CD4-positive, alpha-beta memory T cell (primary cell): ENCODE measurements at regions of chr16 and their contacts with region 1.

Region 1: DNA sequence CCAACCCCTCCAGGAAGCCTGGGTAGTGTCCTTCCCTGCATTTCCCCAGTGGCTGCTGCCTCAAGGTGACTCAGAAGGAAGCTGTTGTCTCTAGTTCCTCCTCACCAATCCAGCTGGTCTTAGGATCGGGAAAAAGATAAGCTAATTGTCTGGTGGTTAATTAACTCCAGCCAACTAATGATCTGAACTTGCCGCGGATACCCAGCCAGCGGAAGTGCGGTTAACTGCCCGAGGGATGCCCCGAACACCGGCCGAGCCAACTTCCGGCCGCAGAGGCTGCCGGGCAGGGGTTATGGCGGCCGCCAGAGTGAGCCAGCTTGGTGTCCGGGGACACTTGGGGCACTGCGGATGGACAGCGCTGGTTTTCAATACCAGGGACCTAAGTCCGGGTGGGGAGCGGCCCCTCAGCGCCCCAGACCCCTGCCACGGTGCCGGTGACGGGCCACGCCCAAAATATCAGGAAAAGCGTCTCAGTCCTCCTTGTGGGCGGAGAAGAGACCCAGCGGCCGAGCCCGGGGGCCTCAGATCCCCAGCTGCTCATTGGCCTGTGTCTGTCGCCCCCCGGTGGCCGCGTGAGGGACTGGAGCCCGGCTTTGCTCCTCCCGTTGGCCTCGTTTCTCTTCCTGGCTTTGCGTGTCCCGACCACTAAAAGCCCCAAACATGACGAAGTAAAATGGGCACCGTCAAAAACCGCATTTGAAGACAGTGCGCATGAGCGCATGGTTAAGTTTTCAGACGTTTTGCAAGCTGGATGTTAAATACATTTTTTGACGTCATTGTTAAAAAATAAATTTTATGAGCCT is 10.2 kb upstream of the PRSS22 start:
- DNase-seq: peak; percentile 94 to 98 (median 96)
- H3K4me3 ChIP-seq: peak overlapping the region; percentile 17 to 76
- H3K4me3 Mint-ChIP-seq: peak overlapping the region; percentile 77 to 90 (median 88)
- H3K27ac ChIP-seq: peak overlapping the region; percentile 69
- H3K27ac Mint-ChIP-seq: peak overlapping the region; percentile 54 to 94 (median 91)
- H3K4me1 ChIP-seq: peaks cover 13% of the 10 kb centered on the region
- H3K4me1 Mint-ChIP-seq: peaks cover 7 to 25% (median 13%) of the 10 kb centered on the region in 4 donors
- H3K27me3 ChIP-seq: no peaks in the 10 kb centered on the region
- H3K27me3 Mint-ChIP-seq: no peaks in the 10 kb centered on the region

Region 2: DNA sequence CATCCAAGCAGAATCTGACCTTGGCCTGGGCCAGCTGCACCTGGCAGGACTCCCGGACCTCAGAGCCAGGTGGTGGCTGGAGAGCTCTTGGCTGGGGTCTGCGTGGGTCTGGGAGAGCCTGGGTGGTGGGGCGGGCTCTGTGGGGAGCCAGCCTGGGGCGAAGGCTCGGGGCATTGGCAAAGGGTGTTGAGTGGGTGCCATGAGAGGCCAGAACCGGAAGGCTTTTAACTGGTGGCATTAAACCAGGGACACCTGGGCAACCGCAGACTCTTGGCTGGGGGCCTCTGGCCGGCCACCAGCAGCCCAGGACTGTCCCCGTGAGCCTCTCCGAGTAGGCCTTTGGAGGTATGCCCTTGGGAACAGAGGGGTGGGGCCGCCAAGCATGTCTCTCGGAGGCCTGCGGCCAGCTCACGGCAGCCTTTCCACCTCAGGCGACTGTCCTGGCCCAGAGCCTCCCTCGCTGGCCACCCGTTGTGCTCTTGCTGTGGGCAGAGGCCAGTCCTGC is 164.9 kb before region 1 on chr16:
- CTCF ChIA-PET with region 1: no interaction called
- POLR2A ChIA-PET with region 1: no interaction called
- intact Hi-C with region 1: no loop called
- DNase-seq: no peak
- H3K4me3 ChIP-seq: no peak overlapping the region
- H3K4me3 Mint-ChIP-seq: no peak overlapping the region
- H3K27ac ChIP-seq: no peak overlapping the region
- H3K27ac Mint-ChIP-seq: no peak overlapping the region
- H3K4me1 ChIP-seq: no peaks in the 10 kb centered on the region
- H3K4me1 Mint-ChIP-seq: no peaks in the 10 kb centered on the region
- H3K27me3 ChIP-seq: no peaks in the 10 kb centered on the region
- H3K27me3 Mint-ChIP-seq: no peaks in the 10 kb centered on the region

Region 3: GRCh38 chr16:2720719-2721633 is 147.2 kb before region 1 on chr16:
- CTCF ChIA-PET with region 1: interaction called, 3 read pairs
- POLR2A ChIA-PET with region 1: no interaction called
- intact Hi-C with region 1: loop called (anchors 1 kb)
- DNase-seq: peak; percentile 85 to 88 (median 87)
- H3K4me3 ChIP-seq: peak overlapping the region; percentile 17 to 49
- H3K4me3 Mint-ChIP-seq: peak overlapping the region; percentile 70 to 85 (median 74)
- H3K27ac ChIP-seq: peak overlapping the region; percentile 56
- H3K27ac Mint-ChIP-seq: peak overlapping the region; percentile 56 to 90 (median 73)
- H3K4me1 ChIP-seq: peaks cover 5% of the 10 kb centered on the region
- H3K4me1 Mint-ChIP-seq: no peaks in the 10 kb centered on the region
- H3K27me3 ChIP-seq: no peaks in the 10 kb centered on the region
- H3K27me3 Mint-ChIP-seq: peaks cover 4 to 7% of the 10 kb centered on the region in 2 donors

Region 4: DNA sequence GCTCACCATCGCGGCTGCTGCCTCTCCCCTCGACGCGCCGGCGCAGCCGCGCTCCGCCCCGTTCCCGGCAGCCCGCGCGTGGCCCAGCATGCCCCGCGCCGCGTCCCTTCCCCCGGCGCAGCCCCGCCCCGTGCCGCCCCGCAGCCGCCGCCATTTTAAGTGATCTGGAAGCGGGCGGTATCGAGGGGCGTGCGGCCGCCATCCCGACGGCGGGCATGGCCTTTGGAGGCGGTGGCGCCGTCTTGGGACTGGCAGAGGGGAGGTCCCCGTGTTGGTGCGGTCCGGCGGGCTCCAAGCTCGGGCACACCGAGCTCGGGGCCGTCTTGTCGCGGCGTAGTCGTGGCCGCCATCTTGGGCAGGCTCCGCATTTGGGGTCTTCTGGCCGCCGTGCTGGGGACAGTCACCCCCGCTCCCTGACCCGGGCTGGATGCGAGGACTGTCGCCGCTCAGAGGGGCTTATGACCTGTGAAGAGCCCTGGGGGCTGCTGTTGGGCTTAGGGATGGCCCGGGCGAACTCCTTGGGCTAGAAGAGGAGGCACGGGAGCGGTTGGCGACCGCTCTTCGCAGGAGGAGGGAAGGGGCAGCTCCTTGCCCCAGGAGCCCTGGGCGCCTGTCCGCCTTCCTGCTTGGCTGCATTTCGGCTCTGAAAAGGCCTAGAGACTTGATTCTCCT is 90.8 kb before region 1 on chr16 and contains the start of gene ELOB:
- CTCF ChIA-PET with region 1: interaction called, 4 read pairs
- POLR2A ChIA-PET with region 1: interaction called, 13 read pairs
- intact Hi-C with region 1: loop called (anchors 5 kb)
- DNase-seq: peak; percentile 87 to 89 (median 89)
- H3K4me3 ChIP-seq: peak within 1 kb of the TSS; percentile 49 to 76
- H3K4me3 Mint-ChIP-seq: peak within 1 kb of the TSS; percentile 93 to 99 (median 94)
- H3K27ac ChIP-seq: peak within 1 kb of the TSS; percentile 99
- H3K27ac Mint-ChIP-seq: peak within 1 kb of the TSS; percentile 96 to 99 (median 98)
- H3K4me1 ChIP-seq: peaks cover 38% of the 10 kb centered on the region
- H3K4me1 Mint-ChIP-seq: peaks cover 18 to 44% (median 37%) of the 10 kb centered on the region in 4 donors
- H3K27me3 ChIP-seq: no peaks in the 10 kb centered on the region
- H3K27me3 Mint-ChIP-seq: no peaks in the 10 kb centered on the region
- total RNA-seq, gene ELOB: 83.0 to 86.8 TPM

Region 5: DNA sequence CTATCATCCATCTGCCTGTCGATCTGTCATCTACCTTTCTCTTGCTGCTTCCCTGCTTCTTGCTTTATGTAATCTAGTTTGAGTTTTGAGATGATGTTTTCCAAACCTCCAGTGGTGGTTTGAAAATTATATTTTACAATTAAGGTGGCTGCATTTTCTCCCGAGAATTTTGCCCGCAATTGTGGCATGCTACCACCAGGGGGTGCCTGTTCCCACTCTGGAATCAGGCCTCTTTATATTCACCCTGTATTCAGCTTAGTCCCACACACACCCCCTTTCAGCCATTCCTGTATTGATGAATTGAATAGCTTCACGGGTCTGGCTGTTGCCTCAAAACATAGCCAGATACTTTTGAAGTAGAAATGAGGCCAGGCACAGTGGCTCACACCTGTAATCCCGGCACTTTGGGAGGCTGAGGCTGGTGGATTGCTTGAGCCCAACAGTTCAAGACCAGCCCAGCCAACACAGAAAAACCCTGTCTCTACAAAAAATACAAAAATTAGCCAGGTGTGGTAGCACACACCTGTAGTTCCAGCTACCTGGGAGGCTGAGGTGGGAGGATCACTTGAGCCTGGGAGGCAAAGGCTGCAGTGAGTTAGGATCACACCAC is 13.4 kb before region 1 on chr16:
- CTCF ChIA-PET with region 1: interaction called, 13 read pairs
- POLR2A ChIA-PET with region 1: no interaction called
- intact Hi-C with region 1: no loop called
- DNase-seq: no peak
- H3K4me3 ChIP-seq: no peak overlapping the region
- H3K4me3 Mint-ChIP-seq: no peak overlapping the region
- H3K27ac ChIP-seq: no peak overlapping the region
- H3K27ac Mint-ChIP-seq: peak overlapping the region in 1 of 7 donors; percentile 3
- H3K4me1 ChIP-seq: peaks cover 12% of the 10 kb centered on the region
- H3K4me1 Mint-ChIP-seq: peaks cover 2 to 6% (median 5%) of the 10 kb centered on the region in 4 donors
- H3K27me3 ChIP-seq: peaks cover 2% of the 10 kb centered on the region
- H3K27me3 Mint-ChIP-seq: peaks cover 0 to 5% of the 10 kb centered on the region in 2 donors

Region 6: GRCh38 chr16:2911580-2912329 is 43.6 kb after region 1 on chr16 and contains the start of gene FLYWCH1:
- CTCF ChIA-PET with region 1: interaction called, 11 read pairs
- POLR2A ChIA-PET with region 1: interaction called, 20 read pairs
- intact Hi-C with region 1: no loop called
- DNase-seq: peak; percentile 97 to 98 (median 97)
- H3K4me3 ChIP-seq: peak within 1 kb of the TSS; percentile 78 to 84
- H3K4me3 Mint-ChIP-seq: peak within 1 kb of the TSS; percentile 91 to 97 (median 92)
- H3K27ac ChIP-seq: peak within 1 kb of the TSS; percentile 72
- H3K27ac Mint-ChIP-seq: peak within 1 kb of the TSS; percentile 87 to 97 (median 94)
- H3K4me1 ChIP-seq: peaks cover 20% of the 10 kb centered on the region
- H3K4me1 Mint-ChIP-seq: peaks cover 13 to 32% (median 23%) of the 10 kb centered on the region in 4 donors
- H3K27me3 ChIP-seq: no peaks in the 10 kb centered on the region
- H3K27me3 Mint-ChIP-seq: no peaks in the 10 kb centered on the region
- total RNA-seq, gene FLYWCH1: 121 to 123 TPM

Region 7: DNA sequence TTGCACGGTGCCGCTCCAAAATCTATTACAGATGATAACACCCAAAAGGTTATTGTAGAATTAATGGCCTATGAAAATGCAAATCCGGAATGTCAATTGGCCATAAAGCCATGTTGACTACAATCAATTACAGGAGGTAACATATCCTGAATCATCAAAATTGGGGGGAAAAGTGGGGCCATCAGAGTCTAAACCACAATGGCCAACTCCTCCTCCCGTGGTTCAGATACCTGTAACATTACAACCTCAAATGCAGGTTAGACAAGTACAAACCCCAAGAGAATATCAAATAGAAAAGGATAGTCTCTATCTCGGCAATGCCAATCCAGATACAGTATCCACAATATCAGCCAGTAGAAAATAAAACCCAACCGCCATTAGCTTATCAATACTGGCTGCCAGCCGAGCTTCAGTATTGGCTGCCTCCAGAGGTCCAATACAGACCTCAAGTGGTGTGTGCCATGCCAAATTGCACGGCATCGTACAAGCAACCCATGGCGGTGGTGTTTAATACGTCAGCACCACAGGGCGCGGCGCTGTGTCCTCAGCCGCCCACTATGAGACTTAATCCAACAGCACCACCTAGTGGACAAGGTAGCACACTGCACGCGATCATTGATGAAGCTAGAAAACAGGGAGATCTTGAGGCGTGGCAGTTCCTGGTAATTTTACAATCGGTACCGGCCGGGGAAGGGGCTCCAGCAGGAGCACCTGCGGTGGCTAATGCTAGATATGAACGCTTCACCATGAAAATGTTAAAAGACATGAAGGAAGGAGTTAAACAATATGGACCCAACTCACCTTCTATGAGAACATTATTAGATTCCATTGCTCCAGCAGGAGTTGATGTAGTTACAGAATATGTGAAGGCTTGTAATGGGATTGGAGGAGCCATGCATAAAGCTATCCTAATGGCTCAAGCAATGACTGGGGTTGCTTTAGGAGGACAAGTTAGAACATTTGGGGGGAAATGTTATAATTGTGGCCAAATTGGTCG is 58.8 kb after region 1 on chr16:
- CTCF ChIA-PET with region 1: interaction called, 18 read pairs
- POLR2A ChIA-PET with region 1: interaction called, 3 read pairs
- intact Hi-C with region 1: no loop called
- DNase-seq: peak; percentile 85 to 89 (median 87)
- H3K4me3 ChIP-seq: no peak overlapping the region
- H3K4me3 Mint-ChIP-seq: peak overlapping the region in 5 of 8 donors; percentile 13 to 56 (median 36)
- H3K27ac ChIP-seq: no peak overlapping the region
- H3K27ac Mint-ChIP-seq: peak overlapping the region; percentile 0 to 90 (median 53)
- H3K4me1 ChIP-seq: peaks cover 12% of the 10 kb centered on the region
- H3K4me1 Mint-ChIP-seq: peaks cover 7 to 21% (median 16%) of the 10 kb centered on the region in 4 donors
- H3K27me3 ChIP-seq: no peaks in the 10 kb centered on the region
- H3K27me3 Mint-ChIP-seq: no peaks in the 10 kb centered on the region